Right ventricle myocardium inferior (tissue), 1 donor: ENCODE measurements at regions of chr17 and their contacts with region 1.

Region 1: GRCh38 chr17:48878918-48879898 is 13.4 kb upstream of the ATP5MC1 start:
- DNase-seq: no peak
- ATAC-seq: peak; percentile 77

Region 2: GRCh38 chr17:48678141-48678971 is 200.9 kb before region 1 on chr17:
- intact Hi-C with region 1: loop called (anchors 5 kb)
- DNase-seq: peak; percentile 77
- ATAC-seq: peak; percentile 84

Region 3: DNA sequence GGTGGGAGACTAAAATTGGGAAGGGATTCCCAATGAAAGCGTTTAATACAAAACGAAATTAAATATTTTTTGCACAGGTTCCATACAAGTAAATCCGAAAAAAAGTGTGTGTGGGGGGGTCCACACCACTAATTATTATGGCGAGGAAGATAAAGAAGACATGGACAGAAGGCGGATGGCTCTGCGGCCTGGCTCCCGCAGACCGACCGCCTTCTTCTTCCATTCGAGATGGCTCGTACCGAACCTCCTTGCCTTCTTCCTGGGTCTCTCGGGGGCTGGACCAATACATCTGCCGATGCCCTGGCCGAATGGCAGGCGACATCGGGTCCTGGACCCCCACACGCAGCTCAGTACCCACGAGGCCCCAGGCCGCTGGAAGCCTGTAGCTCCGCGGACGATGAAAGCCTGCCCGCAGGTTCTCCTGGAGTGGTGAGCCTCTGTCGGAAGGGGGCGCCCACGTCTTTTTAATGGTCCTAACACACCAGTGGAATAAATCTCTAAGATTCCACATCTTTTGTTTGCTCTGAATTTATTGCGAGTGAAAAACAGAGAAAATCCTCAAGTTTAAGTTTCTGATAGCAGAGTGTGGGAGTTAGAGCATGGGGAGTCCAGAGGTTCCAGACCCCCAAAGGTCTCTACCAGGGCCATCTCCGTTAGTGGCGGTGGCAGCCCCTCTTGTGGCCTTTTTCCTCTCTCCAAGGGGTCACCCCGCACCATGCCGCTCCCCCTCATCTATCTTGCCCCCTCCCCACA is 154.8 kb before region 1 on chr17:
- intact Hi-C with region 1: loop called (anchors 5 kb)
- DNase-seq: peak; percentile 91
- ATAC-seq: peak; percentile 83

Region 4: DNA sequence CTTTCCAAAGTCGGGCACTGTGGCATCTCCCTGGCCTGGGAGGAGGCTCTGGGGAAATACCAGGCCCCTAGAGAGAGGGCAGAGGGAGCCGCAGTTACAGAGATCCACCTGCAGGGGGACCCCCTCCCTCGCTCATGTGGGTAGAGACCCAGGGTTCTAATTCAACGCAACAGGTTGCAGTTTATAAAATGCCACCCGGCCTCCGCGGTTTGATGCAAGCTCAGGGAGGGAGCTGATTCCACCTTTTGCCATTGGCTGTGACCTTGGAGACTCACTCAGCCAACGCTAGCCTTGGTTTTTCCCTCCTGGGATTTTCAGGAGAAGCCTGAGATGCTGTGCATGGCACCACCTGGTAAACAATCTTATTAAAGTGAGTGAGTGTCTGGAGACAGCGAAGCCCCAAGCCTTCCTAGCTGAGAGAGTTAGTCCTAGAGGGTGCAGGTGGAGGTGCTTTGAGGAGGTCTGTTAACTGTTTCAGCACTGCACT is 74.2 kb before region 1 on chr17:
- intact Hi-C with region 1: loop called (anchors 1 kb)
- DNase-seq: no peak
- ATAC-seq: peak; percentile 83

Region 5: DNA sequence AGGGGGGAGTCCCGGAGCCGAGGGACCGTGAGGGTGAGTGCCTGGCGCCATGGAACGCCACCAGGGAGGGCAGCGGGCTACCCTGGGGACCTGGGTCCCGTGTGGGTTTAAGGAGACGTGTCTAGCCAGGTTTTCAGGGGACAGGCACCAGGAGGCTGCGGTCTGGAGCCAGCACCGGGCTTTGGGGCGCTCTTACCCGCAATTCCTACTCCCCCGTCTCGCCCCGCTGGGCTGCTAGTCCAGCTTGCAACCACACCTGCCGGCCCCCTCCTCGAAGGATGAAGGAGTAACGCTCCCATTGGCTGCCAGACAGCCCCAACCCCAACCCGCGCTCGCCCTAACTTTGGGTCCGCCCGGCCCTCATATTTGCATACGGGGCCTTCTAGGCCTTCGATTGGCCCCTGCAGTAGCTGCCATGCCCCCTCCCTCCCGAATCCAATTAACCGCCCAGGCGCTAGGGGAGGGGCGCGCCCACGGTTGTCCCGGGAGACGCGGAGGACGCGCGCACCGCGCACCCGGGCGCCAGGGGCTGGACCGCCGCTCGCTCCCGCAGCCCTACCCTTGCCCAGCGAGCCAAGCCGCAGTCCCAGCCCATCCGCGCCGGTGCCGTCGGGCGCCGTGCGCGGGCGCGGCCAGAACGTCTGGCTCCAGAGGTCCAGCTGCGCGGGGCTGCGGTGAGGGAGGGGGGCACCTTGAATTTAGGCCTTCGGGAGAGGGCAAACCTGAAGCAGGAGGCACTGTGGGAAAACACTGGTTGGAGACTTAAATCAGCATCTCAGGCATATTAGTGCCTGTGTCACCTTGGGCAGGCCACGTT is 62.2 kb before region 1 on chr17 and contains the start of gene TTLL6:
- intact Hi-C with region 1: loop called (anchors 2 kb)
- DNase-seq: peak; percentile 86
- ATAC-seq: peak; percentile 99
- total RNA-seq, gene TTLL6: 0.08 TPM